A673 (cell line): ENCODE measurements at regions of chr2 and their contacts with region 1.

Region 1: GRCh38 chr2:66574701-66575624 is 140.0 kb downstream of the MEIS1 start:
- DNase-seq: peak; percentile 97
- H3K4me3 ChIP-seq: peak overlapping the region; percentile 65
- H3K27ac ChIP-seq: peak overlapping the region; percentile 92
- H3K4me1 ChIP-seq: peaks cover 75% of the 10 kb centered on the region
- H3K27me3 ChIP-seq: no peaks in the 10 kb centered on the region
- CTCF ChIP-seq: peak; percentile 74

Region 2: DNA sequence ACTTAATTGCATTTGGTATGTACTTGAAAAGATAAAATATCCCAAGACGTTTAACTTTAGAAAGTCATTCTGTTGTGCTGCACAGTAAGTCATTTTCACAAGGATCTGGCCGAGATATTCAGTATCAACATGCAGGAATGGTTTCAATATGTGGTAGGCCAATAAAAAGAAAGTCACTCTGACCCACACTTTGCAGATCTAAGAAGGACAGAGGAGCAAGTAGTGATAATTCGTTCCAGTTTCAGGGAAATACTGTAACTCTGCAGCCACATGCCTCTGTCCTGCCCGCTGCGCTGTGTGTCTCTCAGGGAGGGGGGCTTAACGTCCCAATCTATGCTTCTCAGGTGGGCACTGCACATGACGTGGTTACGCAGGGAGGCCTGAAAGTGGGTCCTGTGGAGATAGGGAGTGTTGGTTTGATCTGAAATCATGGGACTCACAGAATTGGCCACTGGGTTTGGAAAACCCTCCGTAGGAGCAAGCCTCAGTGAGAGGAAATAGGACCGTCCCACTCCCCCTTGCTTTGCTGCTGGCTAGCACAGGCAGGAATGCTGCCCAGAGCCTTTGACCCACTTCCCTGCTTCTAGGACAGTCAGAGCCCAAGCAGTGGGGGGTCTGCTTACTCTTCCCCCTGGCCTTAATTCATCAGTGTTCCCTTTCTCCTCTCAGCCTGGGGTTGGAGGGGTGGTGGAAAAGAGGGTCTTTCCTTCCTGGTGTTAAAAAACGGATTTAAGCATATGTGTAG is 827.9 kb before region 1 on chr2:
- CTCF ChIA-PET with region 1: no interaction called
- POLR2A ChIA-PET with region 1: no interaction called
- intact Hi-C with region 1: loop called (anchors 2 kb)
- DNase-seq: peak; percentile 82
- H3K4me3 ChIP-seq: no peak overlapping the region
- H3K27ac ChIP-seq: peak overlapping the region; percentile 100
- H3K4me1 ChIP-seq: peaks cover 62% of the 10 kb centered on the region
- H3K27me3 ChIP-seq: no peaks in the 10 kb centered on the region
- CTCF ChIP-seq: no peak

Region 3: DNA sequence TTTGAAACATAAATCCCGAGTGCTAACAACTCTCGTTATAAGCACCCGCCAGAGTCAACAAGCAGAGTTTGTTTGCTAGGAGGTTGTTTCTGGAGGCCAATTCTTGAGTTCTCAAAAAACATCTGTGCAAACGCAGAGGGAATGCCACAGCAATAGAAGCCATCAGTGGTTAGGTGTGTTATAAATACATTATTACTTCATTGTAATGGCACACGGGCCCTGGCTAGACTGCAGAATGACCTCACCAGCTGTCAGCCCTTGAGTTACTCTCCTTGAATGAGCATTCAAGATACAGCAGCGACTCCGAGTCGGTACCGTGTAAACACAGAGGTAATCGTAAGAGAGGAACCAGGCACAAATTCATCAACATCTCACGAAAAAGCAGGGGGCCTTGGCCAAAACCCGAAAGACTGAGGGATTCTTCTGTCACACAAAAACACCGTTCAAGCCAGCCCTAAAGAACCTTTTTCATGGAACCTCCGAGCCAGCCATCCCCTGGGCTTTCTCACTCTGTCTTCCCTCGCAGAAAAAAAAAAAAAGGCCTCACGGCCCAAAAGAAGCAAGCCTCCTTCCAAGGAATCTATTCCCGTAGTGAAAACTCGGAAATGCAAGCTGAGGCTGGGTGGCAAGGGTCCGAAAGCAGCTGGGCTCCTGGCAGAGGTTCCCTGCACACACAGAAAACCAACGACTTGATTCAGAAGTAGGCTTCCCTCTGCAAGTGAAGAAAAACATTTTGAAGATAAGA is 273.8 kb before region 1 on chr2:
- CTCF ChIA-PET with region 1: no interaction called
- POLR2A ChIA-PET with region 1: interaction called, 4 read pairs
- intact Hi-C with region 1: loop called (anchors 10 kb)
- DNase-seq: no peak
- H3K4me3 ChIP-seq: no peak overlapping the region
- H3K27ac ChIP-seq: no peak overlapping the region
- H3K4me1 ChIP-seq: peaks cover 14% of the 10 kb centered on the region
- H3K27me3 ChIP-seq: no peaks in the 10 kb centered on the region
- CTCF ChIP-seq: no peak

Region 4: GRCh38 chr2:66872081-66872985 is 297.4 kb after region 1 on chr2:
- CTCF ChIA-PET with region 1: no interaction called
- POLR2A ChIA-PET with region 1: interaction called, 5 read pairs
- intact Hi-C with region 1: loop called (anchors 2 kb)
- DNase-seq: no peak
- H3K4me3 ChIP-seq: no peak overlapping the region
- H3K27ac ChIP-seq: peak overlapping the region; percentile 94
- H3K4me1 ChIP-seq: peaks cover 60% of the 10 kb centered on the region
- H3K27me3 ChIP-seq: no peaks in the 10 kb centered on the region
- CTCF ChIP-seq: no peak

Region 5: DNA sequence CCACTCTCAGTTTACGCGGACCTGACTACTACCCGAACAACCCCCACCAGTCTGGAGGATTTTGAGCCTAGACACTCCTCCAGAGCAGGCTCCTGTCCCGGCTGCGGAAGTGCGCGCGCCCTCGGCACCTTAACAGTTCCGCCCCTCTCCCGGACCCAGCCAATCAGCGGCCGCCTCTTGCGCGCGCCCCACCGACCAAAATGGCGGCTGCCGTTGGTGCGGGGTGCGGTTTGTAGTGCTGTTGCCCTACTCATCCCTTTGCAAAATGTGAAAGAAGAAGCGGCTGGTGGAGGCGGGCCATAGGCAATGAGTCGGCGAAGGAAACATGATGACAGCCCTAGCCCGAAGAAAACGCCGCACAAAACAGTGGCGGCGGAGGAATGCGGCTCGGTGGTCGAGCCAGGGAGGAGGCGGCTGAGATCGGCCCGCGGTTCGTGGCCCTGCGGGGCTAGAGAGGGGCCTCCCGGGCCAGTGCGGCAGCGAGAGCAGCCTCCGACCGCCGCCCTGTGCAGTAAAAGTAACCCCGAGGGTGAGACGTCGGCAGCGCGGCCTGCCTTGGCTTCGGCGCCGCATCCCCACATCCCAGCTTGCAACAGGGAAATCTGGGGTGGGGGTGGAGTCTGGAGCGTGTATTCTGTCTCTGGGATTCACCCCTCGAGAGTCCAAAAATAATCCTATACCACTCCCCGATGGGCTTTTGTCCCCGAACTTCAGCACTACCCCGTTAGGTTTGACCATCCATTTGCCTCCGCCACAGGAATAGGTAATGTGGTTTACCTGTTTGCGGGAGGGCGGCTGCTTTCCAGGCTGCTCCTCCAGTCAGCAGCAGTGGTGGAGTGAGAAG is 822.4 kb after region 1 on chr2 and contains the start of gene ETAA1:
- CTCF ChIA-PET with region 1: no interaction called
- POLR2A ChIA-PET with region 1: no interaction called
- intact Hi-C with region 1: loop called (anchors 5 kb)
- DNase-seq: peak; percentile 96
- H3K4me3 ChIP-seq: peak within 1 kb of the TSS; percentile 77
- H3K27ac ChIP-seq: peak within 1 kb of the TSS; percentile 85
- H3K4me1 ChIP-seq: peaks cover 23% of the 10 kb centered on the region
- H3K27me3 ChIP-seq: no peaks in the 10 kb centered on the region
- CTCF ChIP-seq: no peak
- total RNA-seq, gene ETAA1: 17.2 and 18.9 TPM in 2 replicates